ENCODE measurements at regions of chr2 and their contacts with region 1.

Region 1: GRCh38 chr2:219278655-219279516 is at the start of gene DNAJB2:
- DNase-seq: peak; percentile 99
- H3K4me3 ChIP-seq: peak within 1 kb of the TSS; percentile 62 to 70 (median 62)
- H3K27ac ChIP-seq: peak within 1 kb of the TSS; percentile 80
- H3K4me1 ChIP-seq: peaks cover 45% of the 10 kb centered on the region
- H3K27me3 ChIP-seq: no peaks in the 10 kb centered on the region
- CTCF ChIP-seq: no peak
- total RNA-seq, gene DNAJB2: 58.9 to 110 TPM

Region 2: DNA sequence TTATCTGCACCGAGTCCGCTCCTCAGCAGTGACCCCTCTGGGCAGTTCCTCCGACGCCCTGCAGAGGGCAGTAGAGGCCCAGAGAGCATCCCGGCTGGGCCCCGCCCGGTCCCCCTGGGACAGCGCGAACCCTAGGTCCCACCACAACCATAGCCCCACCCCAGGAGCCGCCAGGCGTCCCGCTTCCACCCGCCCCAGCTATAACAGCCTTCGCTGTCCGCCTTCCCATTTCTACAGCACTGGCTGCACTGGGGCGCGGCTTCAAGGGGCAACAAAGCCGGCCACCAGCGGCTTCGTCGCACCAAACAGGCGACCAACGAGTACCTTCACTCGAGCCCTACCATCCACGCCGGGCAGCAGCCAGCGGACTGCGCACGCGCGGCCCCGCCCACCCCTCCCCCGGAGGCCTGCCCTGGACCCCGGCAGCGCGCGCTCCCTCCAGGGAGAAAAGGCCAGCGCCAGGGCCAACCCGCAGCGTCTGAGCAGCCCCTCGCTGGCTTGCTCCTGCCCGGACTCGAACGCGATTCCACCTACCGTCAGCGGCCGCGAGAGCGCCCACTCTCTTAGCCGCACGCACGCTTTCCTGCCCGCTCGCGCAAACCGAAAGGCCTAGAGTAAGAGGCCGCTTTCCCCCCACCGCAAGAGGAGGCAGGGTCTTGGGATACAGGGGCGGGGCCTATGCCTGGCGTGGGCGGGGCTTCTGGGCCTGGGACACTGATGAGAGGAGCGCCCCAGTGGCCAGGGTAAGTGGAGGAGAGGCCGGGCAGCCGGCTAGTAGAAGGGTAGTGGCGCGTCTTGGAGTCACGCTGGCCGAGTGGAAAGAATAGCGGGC is 118.5 kb before region 1 on chr2 and contains the start of gene NHEJ1:
- CTCF ChIA-PET with region 1: no interaction called
- dilution Hi-C with region 1: no loop called
- in situ Hi-C with region 1: no loop called
- intact Hi-C with region 1: loop called (anchors 1 kb)
- DNase-seq: peak; percentile 88
- H3K4me3 ChIP-seq: peak within 1 kb of the TSS; percentile 74 to 91 (median 79)
- H3K27ac ChIP-seq: peak within 1 kb of the TSS; percentile 19
- H3K4me1 ChIP-seq: peaks cover 15% of the 10 kb centered on the region
- H3K27me3 ChIP-seq: no peaks in the 10 kb centered on the region
- CTCF ChIP-seq: peak; percentile 84 to 96
- total RNA-seq, gene NHEJ1: 10.4 to 13.3 TPM

Region 3: DNA sequence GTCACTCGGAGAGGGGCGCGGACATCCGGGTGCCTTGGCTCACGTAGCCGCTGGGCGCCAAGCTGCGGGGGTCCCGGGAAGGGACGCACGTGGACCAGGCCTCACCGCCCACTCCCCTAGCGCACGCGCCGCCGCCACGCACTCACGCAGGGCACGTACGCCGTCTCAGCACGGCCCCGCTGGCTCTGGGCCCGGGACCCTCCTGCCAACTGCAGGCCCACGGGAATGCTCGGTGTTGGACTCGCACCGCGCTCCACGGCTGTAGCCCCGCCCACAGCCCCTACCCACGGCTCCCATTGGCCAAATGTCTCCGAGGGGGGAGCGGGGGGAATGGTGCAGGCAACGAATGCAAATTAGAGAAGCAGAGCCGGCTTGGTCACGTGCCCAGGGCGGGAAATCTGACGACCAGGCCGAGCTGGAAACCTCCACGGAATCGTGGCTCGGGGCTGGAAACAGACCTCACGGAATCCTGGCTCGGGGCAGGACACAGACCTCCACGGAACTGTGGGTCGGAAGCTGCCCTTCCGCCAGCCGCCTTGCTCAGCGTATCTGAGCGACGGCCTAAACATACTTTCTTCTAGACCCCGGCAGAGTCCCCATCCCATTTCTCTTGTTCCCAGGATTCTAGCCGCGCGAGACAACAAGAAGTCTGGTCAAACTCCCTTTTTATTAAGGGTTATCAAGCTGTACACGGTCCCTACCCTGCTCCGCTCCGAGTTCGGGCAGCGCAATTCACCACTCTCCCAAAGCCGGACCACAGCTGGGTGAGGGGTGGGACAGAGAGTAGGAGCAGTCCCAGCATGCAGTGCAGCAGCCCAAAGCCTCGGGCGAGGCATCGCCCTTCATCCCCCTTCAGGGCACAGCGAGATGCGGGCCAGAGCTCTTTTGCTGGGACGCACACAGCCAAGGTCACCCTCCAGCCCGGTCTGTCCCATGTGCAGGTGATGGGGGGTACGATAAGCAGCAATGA is 59.9 kb before region 1 on chr2 and contains the start of gene ABCB6:
- CTCF ChIA-PET with region 1: interaction called, 3 read pairs
- dilution Hi-C with region 1: no loop called
- in situ Hi-C with region 1: no loop called
- intact Hi-C with region 1: loop called (anchors 1 kb)
- DNase-seq: peak; percentile 57
- H3K4me3 ChIP-seq: peak within 1 kb of the TSS; percentile 12 to 54 (median 48)
- H3K27ac ChIP-seq: peak within 1 kb of the TSS; percentile 18
- H3K4me1 ChIP-seq: peaks cover 21% of the 10 kb centered on the region
- H3K27me3 ChIP-seq: no peaks in the 10 kb centered on the region
- CTCF ChIP-seq: no peak
- total RNA-seq, gene ABCB6: 9.6 to 15.7 TPM

Region 4: GRCh38 chr2:219253753-219254590 is 24.9 kb before region 1 on chr2 and contains the start of gene TUBA4A:
- CTCF ChIA-PET with region 1: interaction called, 5 read pairs
- dilution Hi-C with region 1: no loop called
- in situ Hi-C with region 1: no loop called
- intact Hi-C with region 1: loop called (anchors 1 kb)
- DNase-seq: peak; percentile 83
- H3K4me3 ChIP-seq: peak within 1 kb of the TSS; percentile 69 to 82 (median 81)
- H3K27ac ChIP-seq: peak within 1 kb of the TSS; percentile 76
- H3K4me1 ChIP-seq: peaks cover 48% of the 10 kb centered on the region
- H3K27me3 ChIP-seq: no peaks in the 10 kb centered on the region
- CTCF ChIP-seq: peak in 1 of 2 donors; percentile 12
- total RNA-seq, gene TUBA4A: 206 to 209 TPM

Region 5: GRCh38 chr2:219289195-219289536 is 10.3 kb after region 1 on chr2:
- CTCF ChIA-PET with region 1: interaction called, 22 read pairs
- dilution Hi-C with region 1: no loop called
- in situ Hi-C with region 1: no loop called
- intact Hi-C with region 1: loop called (anchors 1 kb)
- DNase-seq: no peak
- H3K4me3 ChIP-seq: no peak overlapping the region
- H3K27ac ChIP-seq: no peak overlapping the region
- H3K4me1 ChIP-seq: peaks cover 44% of the 10 kb centered on the region
- H3K27me3 ChIP-seq: no peaks in the 10 kb centered on the region
- CTCF ChIP-seq: no peak

Region 6: DNA sequence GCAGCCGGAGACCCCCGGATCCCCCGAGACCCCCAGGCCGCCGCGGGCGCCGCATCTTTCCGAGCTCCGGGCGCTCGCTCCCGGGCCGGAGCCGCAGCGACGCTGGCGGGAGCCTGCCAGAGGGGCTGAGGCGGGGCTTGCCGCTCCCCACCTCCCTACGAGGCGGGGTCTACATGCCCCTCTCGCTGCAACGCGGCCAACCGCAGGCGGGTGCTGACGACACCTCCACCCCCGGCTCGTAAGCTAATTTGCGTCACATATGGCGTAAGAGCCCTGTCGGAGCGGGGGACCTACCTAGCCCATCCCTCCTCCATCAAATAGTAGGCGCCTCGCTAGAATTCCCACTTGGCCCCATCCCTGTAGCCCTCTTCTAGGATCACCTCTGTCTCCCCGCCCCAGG is 30.4 kb after region 1 on chr2 and contains the start of gene PTPRN:
- CTCF ChIA-PET with region 1: no interaction called
- dilution Hi-C with region 1: no loop called
- in situ Hi-C with region 1: no loop called
- intact Hi-C with region 1: no loop called
- DNase-seq: no peak
- H3K4me3 ChIP-seq: no peak within 1 kb of the TSS
- H3K27ac ChIP-seq: no peak within 1 kb of the TSS
- H3K4me1 ChIP-seq: peaks cover 7% of the 10 kb centered on the region
- H3K27me3 ChIP-seq: peaks cover 8% of the 10 kb centered on the region
- CTCF ChIP-seq: no peak
- total RNA-seq, gene PTPRN: not detected